ENCODE measurements at regions of chr17 and their contacts with region 1.

Region 1: GRCh38 chr17:29263916-29264315 is 17.3 kb downstream of the CRYBA1 start:
- DNase-seq: no peak
- H3K4me3 ChIP-seq: no peak overlapping the region
- H3K4me3 Mint-ChIP-seq: no peak overlapping the region
- H3K27ac ChIP-seq: no peak overlapping the region
- H3K27ac Mint-ChIP-seq: peak overlapping the region in 5 of 8 donors; percentile 15 to 74 (median 19)
- H3K4me1 ChIP-seq: peaks cover 5% of the 10 kb centered on the region
- H3K4me1 Mint-ChIP-seq: peaks cover 24 to 68% (median 57%) of the 10 kb centered on the region in 3 donors
- H3K27me3 ChIP-seq: no peaks in the 10 kb centered on the region
- H3K27me3 Mint-ChIP-seq: no peaks in the 10 kb centered on the region

Region 2: DNA sequence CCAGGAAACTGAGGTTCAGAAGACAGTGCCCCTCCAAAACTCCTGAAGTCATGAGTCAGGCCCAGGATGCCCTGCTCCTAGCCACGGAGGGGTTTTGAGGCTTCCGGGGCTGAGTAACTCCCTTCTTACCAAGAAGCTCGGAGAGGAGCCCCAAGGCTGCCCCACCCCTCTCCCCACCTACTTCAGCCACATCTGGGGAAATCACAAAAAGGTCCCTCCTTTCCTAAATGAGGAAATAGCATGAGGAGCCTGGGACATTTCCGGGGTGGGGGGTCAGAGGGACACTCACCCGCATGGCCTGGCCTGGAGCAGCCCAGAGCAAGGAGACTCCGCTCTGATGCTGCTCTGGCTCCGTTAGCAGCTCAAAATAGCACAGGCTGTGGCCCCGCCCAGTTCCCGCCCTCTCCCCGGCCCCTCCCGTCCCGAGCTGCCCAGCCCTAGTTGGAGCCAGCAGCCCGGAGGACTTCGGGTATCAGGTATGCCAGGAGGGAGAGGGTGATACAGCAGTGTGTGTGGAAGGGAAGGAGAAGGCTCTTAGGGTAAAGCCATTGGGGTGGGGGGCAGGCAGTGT is 123.8 kb before region 1 on chr17:
- CTCF ChIA-PET with region 1: no interaction called
- POLR2A ChIA-PET with region 1: interaction called, 13 read pairs
- DNase-seq: peak; percentile 70 to 91 (median 74)
- H3K4me3 ChIP-seq: peak overlapping the region; percentile 62
- H3K4me3 Mint-ChIP-seq: peak overlapping the region; percentile 87 to 97 (median 95)
- H3K27ac ChIP-seq: peak overlapping the region; percentile 48
- H3K27ac Mint-ChIP-seq: peak overlapping the region; percentile 97 to 99 (median 98)
- H3K4me1 ChIP-seq: peaks cover 56% of the 10 kb centered on the region
- H3K4me1 Mint-ChIP-seq: peaks cover 61 to 90% (median 76%) of the 10 kb centered on the region in 3 donors
- H3K27me3 ChIP-seq: no peaks in the 10 kb centered on the region
- H3K27me3 Mint-ChIP-seq: peaks cover 0 to 2% of the 10 kb centered on the region in 2 donors

Region 3: GRCh38 chr17:29299031-29299430 is 35.1 kb after region 1 on chr17:
- CTCF ChIA-PET with region 1: no interaction called
- POLR2A ChIA-PET with region 1: no interaction called
- DNase-seq: no peak
- H3K4me3 ChIP-seq: no peak overlapping the region
- H3K4me3 Mint-ChIP-seq: no peak overlapping the region
- H3K27ac ChIP-seq: no peak overlapping the region
- H3K27ac Mint-ChIP-seq: no peak overlapping the region
- H3K4me1 ChIP-seq: peaks cover 7% of the 10 kb centered on the region
- H3K4me1 Mint-ChIP-seq: peaks cover 14 to 15% (median 15%) of the 10 kb centered on the region in 3 donors
- H3K27me3 ChIP-seq: no peaks in the 10 kb centered on the region
- H3K27me3 Mint-ChIP-seq: peaks cover 0 to 1% of the 10 kb centered on the region in 2 donors

Measured in CD8-positive, alpha-beta memory T cell (primary cell).